OCI-LY7 (cell line): ENCODE measurements at regions of chr20 and their contacts with region 1.

Region 1: DNA sequence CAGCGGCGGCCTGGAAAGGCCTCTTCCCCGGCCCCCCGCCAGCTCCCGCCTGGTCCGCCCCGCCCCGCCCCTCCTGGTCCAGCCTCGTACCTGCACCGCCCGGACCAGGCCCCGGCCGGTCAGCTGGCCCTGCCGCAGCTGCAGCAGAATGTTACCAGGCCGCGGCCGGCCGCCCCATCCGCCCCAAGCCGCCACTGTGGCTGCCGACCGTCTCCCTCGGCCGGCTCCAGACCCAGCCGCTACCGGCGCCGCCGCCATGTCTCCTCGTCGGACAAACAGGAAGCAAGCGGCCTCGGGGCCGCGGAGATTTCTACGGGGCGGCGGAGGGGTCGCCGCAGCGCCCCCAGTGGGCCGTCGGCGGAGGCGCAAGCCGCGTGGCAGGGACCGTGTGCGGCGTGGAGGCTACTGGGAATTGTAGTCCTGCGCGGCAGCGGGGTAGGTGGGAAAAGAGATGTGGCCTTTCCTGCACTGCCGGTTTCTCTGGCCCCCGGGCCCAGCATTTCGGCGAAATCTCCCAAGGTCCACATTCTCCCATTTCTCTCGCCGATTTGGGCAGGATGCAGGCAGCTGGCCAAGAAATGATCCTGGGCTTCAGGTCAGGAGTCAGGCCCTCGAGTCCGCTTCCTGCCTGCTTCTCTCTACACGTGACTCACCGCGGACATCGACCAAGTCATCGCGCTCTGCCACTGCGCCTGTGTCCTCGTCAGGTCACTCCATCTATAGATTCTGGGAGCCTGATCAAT is at the start of gene TRPC4AP:
- DNase-seq: peak; percentile 92
- H3K4me3 ChIP-seq: peak within 1 kb of the TSS; percentile 100
- H3K27ac ChIP-seq: peak within 1 kb of the TSS; percentile 20
- H3K4me1 ChIP-seq: peaks cover 18% of the 10 kb centered on the region
- CTCF ChIP-seq: peak; percentile 88
- total RNA-seq, gene TRPC4AP: 25.5 and 31.9 TPM in 2 replicates

Region 2: DNA sequence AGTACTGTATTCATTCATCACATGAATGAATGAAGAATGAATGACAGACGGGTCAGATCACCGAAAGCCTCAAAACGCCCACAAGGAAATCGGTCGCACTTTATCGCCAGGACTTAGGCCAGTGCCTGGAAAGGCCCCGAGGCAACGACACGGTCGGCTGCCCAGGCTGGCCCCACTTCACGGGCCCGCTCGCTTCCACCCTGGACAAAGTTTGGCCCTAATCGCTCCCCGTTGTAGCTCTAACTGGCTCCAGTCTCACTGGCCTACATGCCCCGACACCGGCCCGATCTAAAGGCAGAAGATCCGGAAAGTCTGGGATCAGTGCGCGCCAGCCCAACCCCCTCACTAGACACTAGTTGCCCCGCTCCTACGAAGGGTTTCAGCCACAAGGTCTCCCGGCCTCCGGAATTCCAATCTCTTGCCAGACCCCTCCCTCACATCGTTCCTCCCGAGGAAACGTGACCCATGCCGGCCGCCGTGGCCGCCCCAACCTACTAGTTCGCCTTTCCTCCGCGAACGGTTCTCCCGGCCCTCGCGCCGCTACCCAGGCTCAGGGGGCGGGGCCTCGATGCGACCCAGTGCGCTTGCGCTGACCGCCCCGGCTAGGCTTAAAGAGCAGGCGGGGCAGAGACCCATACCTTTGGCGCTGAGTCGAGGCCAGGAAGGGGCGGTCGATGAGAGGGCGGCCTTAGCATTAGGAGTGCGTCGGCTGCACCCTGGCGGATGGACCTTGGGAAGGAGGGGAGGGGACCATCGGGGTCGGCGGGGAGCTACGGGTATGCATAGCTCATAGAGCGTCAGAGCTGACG is 137.3 kb before region 1 on chr20 and contains the starts of genes GSS and MYH7B:
- CTCF ChIA-PET with region 1: no interaction called
- POLR2A ChIA-PET with region 1: no interaction called
- intact Hi-C with region 1: loop called (anchors 10 kb)
- DNase-seq: peak; percentile 97
- H3K4me3 ChIP-seq: peak within 1 kb of the TSS; percentile 78
- H3K27ac ChIP-seq: peak within 1 kb of the TSS; percentile 61
- H3K4me1 ChIP-seq: peaks cover 79% of the 10 kb centered on the region
- CTCF ChIP-seq: peak; percentile 73
- total RNA-seq, gene GSS: 91.4 and 105 TPM in 2 replicates
- total RNA-seq, gene MYH7B: 0.08 and 0.79 TPM in 2 replicates

Region 3: GRCh38 chr20:35207950-35208611 is 115.4 kb after region 1 on chr20:
- CTCF ChIA-PET with region 1: no interaction called
- POLR2A ChIA-PET with region 1: no interaction called
- intact Hi-C with region 1: loop called (anchors 1 kb)
- DNase-seq: peak; percentile 76
- H3K4me3 ChIP-seq: no peak overlapping the region
- H3K27ac ChIP-seq: no peak overlapping the region
- H3K4me1 ChIP-seq: no peaks in the 10 kb centered on the region
- CTCF ChIP-seq: peak; percentile 89

Region 4: GRCh38 chr20:35269055-35269781 is 176.5 kb after region 1 on chr20:
- CTCF ChIA-PET with region 1: no interaction called
- POLR2A ChIA-PET with region 1: interaction called, 5 read pairs
- intact Hi-C with region 1: loop called (anchors 5 kb)
- DNase-seq: peak; percentile 57
- H3K4me3 ChIP-seq: no peak overlapping the region
- H3K27ac ChIP-seq: no peak overlapping the region
- H3K4me1 ChIP-seq: no peaks in the 10 kb centered on the region
- CTCF ChIP-seq: peak; percentile 87